Activated B cell treated with CpG ODN at 0.5 μM for 24 hours (primary cell): ENCODE measurements at regions of chr9 and their contacts with region 1.

Region 1: GRCh38 chr9:97598461-97599288 is 34.5 kb downstream of the TSTD2 start:
- DNase-seq: no peak
- ATAC-seq: peak; percentile 98
- H3K4me3 Mint-ChIP-seq: peak overlapping the region; percentile 46
- H3K27ac Mint-ChIP-seq: peak overlapping the region; percentile 31
- H3K4me1 Mint-ChIP-seq: peaks cover 7% of the 10 kb centered on the region
- H3K27me3 Mint-ChIP-seq: no peaks in the 10 kb centered on the region
- CTCF ChIP-seq: no peak

Region 2: GRCh38 chr9:97386733-97387503 is 211.8 kb before region 1 on chr9:
- CTCF ChIA-PET with region 1: interaction called, 30 read pairs
- POLR2A ChIA-PET with region 1: no interaction called
- intact Hi-C with region 1: loop called (anchors 1 kb)
- DNase-seq: peak; percentile 76
- ATAC-seq: peak; percentile 53
- H3K4me3 Mint-ChIP-seq: no peak overlapping the region
- H3K27ac Mint-ChIP-seq: no peak overlapping the region
- H3K4me1 Mint-ChIP-seq: peaks cover 23% of the 10 kb centered on the region
- H3K27me3 Mint-ChIP-seq: peaks cover 4% of the 10 kb centered on the region
- CTCF ChIP-seq: peak; percentile 52

Region 3: DNA sequence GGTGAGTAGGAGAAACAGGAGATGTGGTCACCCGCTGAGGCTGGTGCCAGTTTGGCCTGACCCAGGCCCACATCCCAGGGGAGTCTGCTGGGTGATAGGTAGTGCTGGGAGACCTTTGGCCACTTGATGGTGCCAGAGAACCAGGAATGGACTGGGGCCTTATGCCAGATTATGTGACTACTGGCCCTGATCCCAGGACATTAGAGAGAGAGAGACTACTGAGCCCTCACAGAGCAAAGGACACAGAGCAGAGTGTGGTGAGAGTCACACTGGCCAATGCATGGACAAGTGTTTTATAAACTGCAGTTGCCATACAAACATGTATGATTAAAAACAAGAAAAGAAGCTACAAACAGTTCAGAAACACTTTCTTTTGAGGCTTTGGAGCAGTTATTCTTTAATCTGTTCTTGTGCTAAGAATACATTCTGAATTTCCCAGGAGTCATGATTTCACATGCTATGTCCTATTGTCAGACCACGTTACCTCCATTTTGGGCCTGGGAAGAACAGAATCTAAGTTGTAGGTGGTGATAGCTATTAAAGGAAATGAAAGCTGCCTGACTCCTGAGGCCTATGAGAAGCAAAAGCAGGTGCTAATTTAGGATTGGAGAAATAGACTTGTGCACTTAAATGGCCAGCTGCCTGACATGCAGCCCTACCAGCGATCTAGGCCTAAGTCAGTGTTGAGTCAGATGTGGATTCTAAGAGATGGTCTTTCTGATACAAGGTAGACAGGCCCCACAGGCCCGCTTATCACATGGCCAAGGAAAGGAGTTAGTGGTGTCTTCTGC is 129.8 kb before region 1 on chr9:
- CTCF ChIA-PET with region 1: interaction called, 71 read pairs
- POLR2A ChIA-PET with region 1: no interaction called
- intact Hi-C with region 1: loop called (anchors 1 kb)
- DNase-seq: no peak
- ATAC-seq: no peak
- H3K4me3 Mint-ChIP-seq: no peak overlapping the region
- H3K27ac Mint-ChIP-seq: no peak overlapping the region
- H3K4me1 Mint-ChIP-seq: no peaks in the 10 kb centered on the region
- H3K27me3 Mint-ChIP-seq: no peaks in the 10 kb centered on the region
- CTCF ChIP-seq: no peak

Region 4: DNA sequence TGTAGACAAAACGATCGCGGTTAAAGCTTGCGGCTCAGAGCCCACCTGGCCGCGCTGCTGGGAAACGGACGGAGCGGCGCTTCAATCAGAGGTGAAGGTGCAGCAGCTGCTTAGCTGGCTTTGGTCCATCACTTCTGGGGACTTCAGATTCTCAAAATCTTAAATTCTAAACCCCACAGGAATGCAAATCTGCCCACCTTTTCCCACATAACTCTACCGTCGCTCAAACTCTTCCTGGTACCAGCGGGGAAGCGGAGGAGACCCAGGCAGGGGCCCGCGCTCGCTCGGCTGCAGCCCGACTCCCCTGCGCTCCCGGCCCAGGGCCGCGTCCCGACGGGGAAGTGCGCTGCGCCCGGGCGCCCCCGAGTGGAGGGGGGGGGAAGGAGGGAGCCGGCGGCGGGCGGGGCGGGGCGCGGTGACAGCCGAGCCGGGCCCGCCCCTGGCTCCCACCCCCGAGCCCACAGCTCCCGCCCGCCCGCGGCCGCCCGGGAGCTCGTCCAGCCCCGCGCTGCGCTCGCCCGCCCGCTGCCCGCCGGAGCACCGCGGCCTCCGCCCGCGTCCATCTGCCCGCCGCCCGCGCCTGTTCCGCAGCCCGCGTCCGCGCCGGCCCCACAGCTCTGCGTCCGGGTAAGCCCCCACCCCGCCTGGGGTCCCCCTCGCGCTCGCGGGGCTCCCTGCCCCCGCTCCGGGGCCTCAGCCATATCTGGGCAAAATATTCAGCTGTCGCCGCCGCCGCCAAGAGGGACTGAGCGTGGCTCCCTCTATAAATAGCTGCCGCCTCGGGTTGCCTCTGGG is 97.3 kb before region 1 on chr9 and contains the start of gene TMOD1:
- CTCF ChIA-PET with region 1: no interaction called
- POLR2A ChIA-PET with region 1: no interaction called
- intact Hi-C with region 1: loop called (anchors 1 kb)
- DNase-seq: peak; percentile 48
- ATAC-seq: peak; percentile 88
- H3K4me3 Mint-ChIP-seq: peak within 1 kb of the TSS; percentile 77
- H3K27ac Mint-ChIP-seq: no peak within 1 kb of the TSS
- H3K4me1 Mint-ChIP-seq: peaks cover 21% of the 10 kb centered on the region
- H3K27me3 Mint-ChIP-seq: peaks cover 29% of the 10 kb centered on the region
- CTCF ChIP-seq: no peak
- total RNA-seq, gene TMOD1: 1.2 and 1.9 TPM in 2 replicates

Region 5: DNA sequence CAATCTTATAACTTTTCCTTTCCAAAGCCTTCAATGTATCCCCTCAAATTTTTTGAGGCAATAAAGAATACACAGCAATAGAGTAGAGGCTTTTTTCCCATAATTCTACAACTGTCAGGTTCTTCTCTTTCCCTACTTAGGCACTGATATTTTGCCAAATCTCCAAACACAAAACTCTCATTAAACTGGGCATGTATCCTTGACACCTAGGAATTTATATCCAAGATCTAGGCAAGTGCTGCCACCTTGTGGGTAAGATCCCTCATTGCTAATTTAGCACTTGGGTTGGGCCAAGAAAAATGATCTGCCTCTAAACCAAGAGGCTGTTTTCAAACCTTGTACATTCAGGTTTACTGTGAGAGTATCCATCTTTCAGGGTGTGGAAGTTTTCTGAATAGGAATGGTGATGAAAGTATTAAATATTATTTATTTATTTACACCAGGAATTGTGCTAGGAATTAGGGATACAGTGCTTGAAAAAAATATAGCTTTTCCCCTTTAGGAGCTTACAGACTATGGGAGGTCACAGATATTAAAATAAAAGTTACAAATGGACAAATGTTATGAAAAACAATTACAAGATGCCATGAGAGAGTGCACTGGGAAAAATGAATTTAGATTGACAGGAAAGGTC is 16.9 kb after region 1 on chr9:
- CTCF ChIA-PET with region 1: interaction called, 22 read pairs
- POLR2A ChIA-PET with region 1: no interaction called
- intact Hi-C with region 1: no loop called
- DNase-seq: no peak
- ATAC-seq: peak; percentile 52
- H3K4me3 Mint-ChIP-seq: no peak overlapping the region
- H3K27ac Mint-ChIP-seq: no peak overlapping the region
- H3K4me1 Mint-ChIP-seq: peaks cover 12% of the 10 kb centered on the region
- H3K27me3 Mint-ChIP-seq: no peaks in the 10 kb centered on the region
- CTCF ChIP-seq: peak; percentile 77